Caco-2 (cell line): ENCODE measurements at regions of chr9 and their contacts with region 1.

Region 1: GRCh38 chr9:120152295-120152694 is 427.7 kb downstream of the CDK5RAP2 start:
- DNase-seq: no peak
- H3K4me3 ChIP-seq: no peak overlapping the region
- H3K4me3 Mint-ChIP-seq: no peak overlapping the region
- H3K27ac Mint-ChIP-seq: no peak overlapping the region
- H3K4me1 ChIP-seq: no peaks in the 10 kb centered on the region
- H3K4me1 Mint-ChIP-seq: no peaks in the 10 kb centered on the region
- H3K27me3 ChIP-seq: peaks cover 1% of the 10 kb centered on the region; the same call in 1 of the 2 replicates
- H3K27me3 Mint-ChIP-seq: peaks cover 4% of the 10 kb centered on the region
- CTCF ChIP-seq: no peak

Region 2: DNA sequence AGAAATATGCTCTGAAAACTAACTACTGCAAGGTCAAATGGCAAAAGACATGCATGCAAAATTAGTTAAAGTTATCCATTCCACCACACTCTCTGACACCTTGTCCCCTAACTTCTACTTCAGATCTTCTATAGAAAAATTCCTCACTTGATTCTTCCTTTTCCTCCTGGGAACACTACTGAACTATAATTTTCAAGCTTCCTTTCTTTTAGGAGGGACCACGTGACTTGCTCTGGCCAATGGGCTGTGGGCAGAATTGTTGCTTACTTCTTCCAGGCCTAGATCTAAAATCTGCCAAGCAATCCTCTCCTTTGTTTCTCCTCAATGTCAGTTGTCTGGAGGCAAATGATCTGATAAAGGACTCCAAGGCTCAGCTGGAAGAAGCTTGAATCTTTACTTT is 13.3 kb before region 1 on chr9:
- CTCF ChIA-PET with region 1: no interaction called
- POLR2A ChIA-PET with region 1: no interaction called
- intact Hi-C with region 1: loop called (anchors 1 kb)
- DNase-seq: no peak
- H3K4me3 ChIP-seq: no peak overlapping the region
- H3K4me3 Mint-ChIP-seq: no peak overlapping the region
- H3K27ac Mint-ChIP-seq: no peak overlapping the region
- H3K4me1 ChIP-seq: no peaks in the 10 kb centered on the region
- H3K4me1 Mint-ChIP-seq: no peaks in the 10 kb centered on the region
- H3K27me3 ChIP-seq: no peaks in the 10 kb centered on the region
- H3K27me3 Mint-ChIP-seq: no peaks in the 10 kb centered on the region
- CTCF ChIP-seq: no peak

Region 3: GRCh38 chr9:120197605-120198004 is 45.3 kb after region 1 on chr9:
- CTCF ChIA-PET with region 1: no interaction called
- POLR2A ChIA-PET with region 1: no interaction called
- intact Hi-C with region 1: loop called (anchors 2 kb)
- DNase-seq: no peak
- H3K4me3 ChIP-seq: no peak overlapping the region
- H3K4me3 Mint-ChIP-seq: no peak overlapping the region
- H3K27ac Mint-ChIP-seq: no peak overlapping the region
- H3K4me1 ChIP-seq: no peaks in the 10 kb centered on the region
- H3K4me1 Mint-ChIP-seq: no peaks in the 10 kb centered on the region
- H3K27me3 ChIP-seq: no peaks in the 10 kb centered on the region
- H3K27me3 Mint-ChIP-seq: peaks cover 3% of the 10 kb centered on the region
- CTCF ChIP-seq: no peak

Region 4: GRCh38 chr9:120366646-120367019 is 214.3 kb after region 1 on chr9:
- CTCF ChIA-PET with region 1: no interaction called
- POLR2A ChIA-PET with region 1: no interaction called
- intact Hi-C with region 1: no loop called
- DNase-seq: peak; percentile 65 to 85
- H3K4me3 ChIP-seq: no peak overlapping the region
- H3K4me3 Mint-ChIP-seq: no peak overlapping the region
- H3K27ac Mint-ChIP-seq: peak overlapping the region; percentile 78
- H3K4me1 ChIP-seq: peaks cover 18% of the 10 kb centered on the region
- H3K4me1 Mint-ChIP-seq: peaks cover 14% of the 10 kb centered on the region
- H3K27me3 ChIP-seq: no peaks in the 10 kb centered on the region
- H3K27me3 Mint-ChIP-seq: no peaks in the 10 kb centered on the region
- CTCF ChIP-seq: peak; percentile 9 to 30